ENCODE measurements at regions of chr7 and their contacts with region 1.

Region 1: GRCh38 chr7:17530741-17531417 is 232.4 kb downstream of the AHR start:
- DNase-seq: no peak
- H3K4me3 ChIP-seq: no peak overlapping the region
- H3K27ac ChIP-seq: no peak overlapping the region
- H3K4me1 ChIP-seq: peaks cover 0 to 10% (median 0%) of the 10 kb centered on the region in 4 donors
- H3K27me3 ChIP-seq: no peaks in the 10 kb centered on the region
- CTCF ChIP-seq: peak; percentile 17 to 26

Region 2: GRCh38 chr7:15937571-15937970 is 1593.3 kb before region 1 on chr7:
- intact Hi-C with region 1: loop called (anchors 10 kb)
- DNase-seq: no peak
- H3K4me3 ChIP-seq: no peak overlapping the region
- H3K27ac ChIP-seq: no peak overlapping the region
- H3K4me1 ChIP-seq: no peaks in the 10 kb centered on the region
- H3K27me3 ChIP-seq: no peaks in the 10 kb centered on the region
- CTCF ChIP-seq: no peak

Region 3: DNA sequence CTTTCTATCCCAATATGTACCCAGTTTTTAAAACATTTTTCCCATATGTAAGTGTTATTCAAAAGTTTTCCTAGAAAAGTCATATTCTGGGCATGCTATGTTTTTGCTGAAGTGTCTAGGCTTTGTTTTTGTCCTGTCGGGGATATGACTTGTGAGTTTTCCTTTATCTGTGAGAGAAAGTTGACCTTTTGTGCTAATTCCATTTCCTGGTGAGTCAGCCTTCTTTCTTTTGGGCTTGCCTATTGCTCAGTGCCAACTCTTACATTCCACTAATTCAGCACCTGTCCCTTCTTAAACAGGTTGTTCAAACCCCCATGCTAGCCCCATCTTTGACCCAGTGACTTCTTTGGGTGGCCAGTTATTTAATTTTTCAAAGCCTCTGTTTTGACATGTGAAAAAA is 86.2 kb before region 1 on chr7:
- intact Hi-C with region 1: no loop called
- DNase-seq: no peak
- H3K4me3 ChIP-seq: no peak overlapping the region
- H3K27ac ChIP-seq: no peak overlapping the region
- H3K4me1 ChIP-seq: peaks cover 0 to 9% (median 0%) of the 10 kb centered on the region in 4 donors
- H3K27me3 ChIP-seq: no peaks in the 10 kb centered on the region
- CTCF ChIP-seq: no peak

Region 4: DNA sequence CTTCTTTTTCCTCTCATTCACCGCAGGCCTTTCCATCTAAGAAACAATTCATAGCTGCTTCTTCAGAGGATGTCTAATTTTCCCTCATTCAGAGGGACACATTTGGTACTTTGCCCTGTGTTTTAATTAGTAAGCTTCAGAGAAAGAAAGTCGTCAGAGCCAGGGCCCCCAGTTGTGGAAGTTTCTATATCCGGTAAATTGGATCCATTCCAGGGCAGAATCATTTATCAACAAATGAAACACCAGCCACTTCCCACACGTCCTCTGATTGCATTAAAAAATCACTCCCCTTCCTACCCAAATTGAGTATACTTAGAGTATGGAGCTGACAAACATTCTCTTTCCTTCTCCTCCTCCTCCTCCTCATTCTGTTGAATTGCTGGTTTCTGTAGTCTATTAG is 758.9 kb after region 1 on chr7:
- intact Hi-C with region 1: no loop called
- DNase-seq: no peak
- H3K4me3 ChIP-seq: no peak overlapping the region
- H3K27ac ChIP-seq: no peak overlapping the region
- H3K4me1 ChIP-seq: no peaks in the 10 kb centered on the region
- H3K27me3 ChIP-seq: no peaks in the 10 kb centered on the region
- CTCF ChIP-seq: no peak

Measured in tibial artery (tissue), 4 donors.